Dorsolateral prefrontal cortex (tissue), 120 donors: ENCODE measurements at regions of chr6 and their contacts with region 1.

Region 1: DNA sequence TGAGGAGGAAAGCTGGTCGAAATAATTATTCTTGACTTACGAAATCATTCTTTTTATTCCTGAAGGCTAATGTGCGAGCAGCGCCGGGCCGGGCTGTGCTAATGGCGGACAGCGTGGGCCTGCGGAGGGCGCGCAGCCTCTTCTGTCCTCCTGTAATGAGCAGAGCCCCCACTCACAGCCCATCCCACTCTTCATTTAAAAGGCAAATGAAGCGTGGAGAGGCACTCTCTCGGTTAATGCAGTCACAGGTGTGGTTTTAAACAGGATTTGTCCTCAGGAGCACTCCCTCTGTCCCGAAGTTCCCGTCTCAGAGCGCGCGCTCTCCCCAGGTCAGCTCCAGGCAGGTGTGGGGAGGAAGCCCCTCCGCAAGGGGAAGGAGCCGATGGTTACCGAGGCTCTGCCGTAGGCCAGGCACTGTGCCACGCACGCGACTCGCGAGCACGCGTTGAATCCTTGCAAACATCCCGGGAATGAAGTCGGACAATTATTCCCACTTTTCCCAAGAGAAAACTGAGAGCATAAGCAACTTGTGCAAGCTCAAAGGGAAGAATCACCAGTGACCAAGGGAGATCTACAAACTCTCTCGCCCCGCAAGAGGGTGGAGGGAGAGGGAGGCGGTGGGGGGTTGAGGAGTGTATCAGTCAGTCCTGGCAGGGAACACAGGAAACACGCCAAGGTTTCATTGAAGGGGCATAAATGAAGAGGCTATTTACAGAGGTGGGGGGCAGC is 35.5 kb upstream of the ZFAND3 start:
- DNase-seq: peak in 9 of 10 donors; percentile 28 to 51 (median 37)
- H3K4me3 ChIP-seq: peak overlapping the region; percentile 42 to 83 (median 65)
- H3K27ac ChIP-seq: peak overlapping the region in 54 of 59 donors; percentile 16 to 89 (median 65)
- H3K27me3 ChIP-seq: no peaks in the 10 kb centered on the region
- CTCF ChIP-seq: peak in 18 of 56 donors; percentile 8 to 38 (median 18)

Region 2: GRCh38 chr6:37819177-37819823 is 35.3 kb after region 1 on chr6 and contains the start of gene ZFAND3:
- intact Hi-C with region 1: loop called in 1 of 2 experiments (anchors 5 kb)
- DNase-seq: peak; percentile 90 to 98 (median 94)
- H3K4me3 ChIP-seq: peak within 1 kb of the TSS; percentile 66 to 96 (median 86)
- H3K27ac ChIP-seq: peak within 1 kb of the TSS; percentile 92 to 100 (median 99)
- H3K27me3 ChIP-seq: no peaks in the 10 kb centered on the region
- CTCF ChIP-seq: peak in 11 of 56 donors; percentile 4 to 30 (median 9)
- total RNA-seq, gene ZFAND3: 48.5 to 106 (median 70.2) TPM

Region 3: GRCh38 chr6:37840143-37840939 is 56.3 kb after region 1 on chr6:
- intact Hi-C with region 1: no loop called
- DNase-seq: no peak
- H3K4me3 ChIP-seq: no peak overlapping the region
- H3K27ac ChIP-seq: no peak overlapping the region
- H3K27me3 ChIP-seq: no peaks in the 10 kb centered on the region
- CTCF ChIP-seq: no peak

Region 4: DNA sequence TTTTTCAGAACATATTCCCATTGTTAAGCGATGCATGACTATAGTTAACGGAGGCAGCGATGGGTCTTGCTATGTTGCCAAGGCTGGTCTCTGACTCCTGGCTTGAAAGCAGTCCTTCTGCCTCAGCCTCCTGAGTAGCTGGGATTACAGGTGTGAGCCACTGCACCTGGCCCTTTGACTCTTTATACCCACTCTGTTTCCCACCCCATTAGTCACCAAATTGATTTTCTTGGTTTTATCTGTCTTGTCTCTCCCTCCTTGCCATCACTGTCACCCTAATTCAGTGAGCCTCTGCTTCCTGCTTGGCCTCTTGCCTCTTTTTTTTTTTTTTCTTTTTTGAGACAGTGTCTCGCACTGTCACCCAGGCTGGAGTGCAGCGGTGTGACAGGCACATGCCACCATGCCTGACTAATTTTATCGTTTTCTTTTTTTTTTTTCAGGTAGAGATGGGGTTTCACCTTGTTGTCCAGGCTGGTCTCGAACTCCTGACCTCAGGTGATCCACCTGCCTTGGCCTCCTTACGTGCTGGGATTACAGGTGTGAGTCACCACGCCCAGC is 66.8 kb after region 1 on chr6:
- intact Hi-C with region 1: loop called in 1 of 2 experiments (anchors 10 kb)
- DNase-seq: no peak
- H3K4me3 ChIP-seq: no peak overlapping the region
- H3K27ac ChIP-seq: no peak overlapping the region
- H3K27me3 ChIP-seq: no peaks in the 10 kb centered on the region
- CTCF ChIP-seq: no peak

Region 5: DNA sequence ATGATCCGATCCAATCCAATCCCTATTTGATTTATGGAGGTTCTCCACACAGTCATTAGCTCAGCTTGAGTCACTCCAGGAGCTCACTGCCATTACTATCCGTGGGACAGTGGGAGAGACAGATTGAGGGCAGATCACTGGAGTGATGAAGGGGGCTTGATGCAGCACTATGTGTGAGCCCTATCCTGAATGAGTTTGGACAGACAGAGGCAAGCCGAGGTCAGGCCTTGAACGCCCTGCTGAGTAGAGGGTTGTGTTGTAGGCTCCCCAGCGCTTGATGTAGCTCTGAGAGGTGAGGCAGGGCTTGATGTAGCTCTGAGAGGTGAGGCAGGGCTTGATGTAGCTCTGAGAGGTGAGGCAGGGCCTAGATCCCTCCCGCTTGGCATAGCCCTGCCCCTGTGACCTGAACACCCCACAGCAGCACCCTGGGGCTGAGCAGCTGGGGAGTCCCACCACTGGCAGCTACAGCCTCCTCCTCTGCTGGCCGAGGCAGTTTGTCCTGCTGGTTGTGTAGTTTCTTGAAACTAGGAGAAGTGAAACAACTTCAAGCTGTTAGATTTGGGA is 94.2 kb after region 1 on chr6:
- intact Hi-C with region 1: no loop called
- DNase-seq: no peak
- H3K4me3 ChIP-seq: no peak overlapping the region
- H3K27ac ChIP-seq: no peak overlapping the region
- H3K27me3 ChIP-seq: no peaks in the 10 kb centered on the region
- CTCF ChIP-seq: no peak